ENCODE measurements at regions of chr1 and their contacts with region 1.

Region 1: GRCh38 chr1:206663832-206664652 is 20.7 kb upstream of the MAPKAPK2 start:
- DNase-seq: peak; percentile 78
- H3K4me3 Mint-ChIP-seq: no peak overlapping the region
- H3K27ac Mint-ChIP-seq: no peak overlapping the region
- H3K4me1 Mint-ChIP-seq: peaks cover 38% of the 10 kb centered on the region
- H3K27me3 Mint-ChIP-seq: peaks cover 9% of the 10 kb centered on the region

Region 2: GRCh38 chr1:206479183-206480125 is 184.6 kb before region 1 on chr1:
- CTCF ChIA-PET with region 1: interaction called, 48 read pairs
- POLR2A ChIA-PET with region 1: no interaction called
- intact Hi-C with region 1: no loop called
- DNase-seq: peak; percentile 79
- H3K4me3 Mint-ChIP-seq: no peak overlapping the region
- H3K27ac Mint-ChIP-seq: peak overlapping the region; percentile 26
- H3K4me1 Mint-ChIP-seq: peaks cover 37% of the 10 kb centered on the region
- H3K27me3 Mint-ChIP-seq: no peaks in the 10 kb centered on the region

Region 3: DNA sequence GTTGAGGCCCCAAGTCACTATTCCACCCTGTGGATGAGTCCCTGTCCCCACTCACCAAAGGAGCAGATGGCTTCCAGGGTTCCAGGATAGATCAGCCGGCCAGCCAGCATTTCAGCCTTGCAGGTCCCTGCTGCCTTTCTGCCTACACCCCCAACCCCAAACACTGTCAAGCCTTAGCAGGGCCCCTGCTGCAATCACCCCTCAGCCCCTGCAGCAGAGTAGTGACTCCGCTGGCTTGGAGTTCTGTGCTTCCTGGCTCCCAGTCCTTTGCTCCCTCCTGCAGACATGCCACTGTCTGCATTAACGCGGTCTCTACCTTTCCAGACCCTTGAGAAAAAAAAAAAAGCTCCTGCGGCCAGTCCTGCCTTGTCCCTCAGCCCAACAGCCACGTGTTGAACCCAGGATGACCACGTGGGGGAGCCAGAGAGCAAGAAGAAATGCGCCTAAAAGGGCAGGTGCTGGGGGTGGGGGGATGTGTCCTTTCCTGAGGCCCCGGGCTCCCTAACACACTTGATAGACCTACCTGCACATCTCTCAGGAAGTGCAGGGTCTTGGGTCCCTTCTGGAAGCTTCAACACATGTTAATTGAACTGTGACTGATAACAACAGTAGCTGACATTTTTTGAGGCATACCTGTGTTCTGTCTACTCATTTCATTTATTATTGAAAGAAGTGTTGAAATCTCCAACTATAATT is 119.3 kb before region 1 on chr1:
- CTCF ChIA-PET with region 1: interaction called, 35 read pairs
- POLR2A ChIA-PET with region 1: interaction called, 3 read pairs
- intact Hi-C with region 1: loop called (anchors 2 kb)
- DNase-seq: peak; percentile 88
- H3K4me3 Mint-ChIP-seq: no peak overlapping the region
- H3K27ac Mint-ChIP-seq: peak overlapping the region; percentile 42
- H3K4me1 Mint-ChIP-seq: peaks cover 17% of the 10 kb centered on the region
- H3K27me3 Mint-ChIP-seq: no peaks in the 10 kb centered on the region

Region 4: GRCh38 chr1:206563367-206564207 is 100.5 kb before region 1 on chr1:
- CTCF ChIA-PET with region 1: no interaction called
- POLR2A ChIA-PET with region 1: no interaction called
- intact Hi-C with region 1: no loop called
- DNase-seq: no peak
- H3K4me3 Mint-ChIP-seq: peak overlapping the region; percentile 72
- H3K27ac Mint-ChIP-seq: peak overlapping the region; percentile 99
- H3K4me1 Mint-ChIP-seq: peaks cover 86% of the 10 kb centered on the region
- H3K27me3 Mint-ChIP-seq: no peaks in the 10 kb centered on the region

Region 5: GRCh38 chr1:206612129-206612876 is 51.7 kb before region 1 on chr1 and contains the start of gene EIF2D:
- CTCF ChIA-PET with region 1: interaction called, 165 read pairs
- POLR2A ChIA-PET with region 1: interaction called, 7 read pairs
- intact Hi-C with region 1: loop called (anchors 1 kb)
- DNase-seq: peak; percentile 96
- H3K4me3 Mint-ChIP-seq: peak within 1 kb of the TSS; percentile 96
- H3K27ac Mint-ChIP-seq: peak within 1 kb of the TSS; percentile 90
- H3K4me1 Mint-ChIP-seq: peaks cover 32% of the 10 kb centered on the region
- H3K27me3 Mint-ChIP-seq: no peaks in the 10 kb centered on the region
- total RNA-seq, gene EIF2D: 84.6 to 87.5 TPM

Region 6: DNA sequence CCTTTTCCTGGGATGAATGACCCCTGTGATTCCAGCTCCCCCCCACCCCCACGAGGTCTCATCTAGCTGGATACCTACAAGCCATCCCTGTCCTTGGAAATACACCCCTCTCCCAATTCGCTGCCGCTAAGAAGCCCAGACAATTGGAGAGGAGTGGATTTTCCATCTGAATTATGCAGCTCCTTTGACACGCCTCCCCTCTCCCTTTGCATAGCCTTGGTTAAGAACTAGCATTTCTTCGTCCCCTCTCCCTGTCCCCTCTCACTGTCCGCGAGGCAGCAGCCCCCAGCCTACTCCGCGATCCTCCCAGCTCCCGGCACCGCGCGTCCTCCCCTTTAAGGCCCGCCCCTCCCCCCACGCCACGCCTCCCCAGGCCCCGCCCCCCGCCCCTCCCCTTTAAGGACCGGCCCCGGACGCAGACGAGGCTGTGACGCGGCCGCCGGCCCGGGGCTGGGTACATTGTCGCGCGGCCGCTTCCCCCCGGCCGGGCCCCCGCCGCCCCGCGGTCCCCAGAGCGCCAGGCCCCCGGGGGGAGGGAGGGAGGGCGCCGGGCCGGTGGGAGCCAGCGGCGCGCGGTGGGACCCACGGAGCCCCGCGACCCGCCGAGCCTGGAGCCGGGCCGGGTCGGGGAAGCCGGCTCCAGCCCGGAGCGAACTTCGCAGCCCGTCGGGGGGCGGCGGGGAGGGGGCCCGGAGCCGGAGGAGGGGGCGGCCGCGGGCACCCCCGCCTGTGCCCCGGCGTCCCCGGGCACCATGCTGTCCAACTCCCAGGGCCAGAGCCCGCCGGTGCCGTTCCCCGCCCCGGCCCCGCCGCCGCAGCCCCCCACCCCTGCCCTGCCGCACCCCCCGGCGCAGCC is 20.7 kb after region 1 on chr1 and contains the start of gene MAPKAPK2:
- CTCF ChIA-PET with region 1: interaction called, 33 read pairs
- POLR2A ChIA-PET with region 1: interaction called, 3 read pairs
- intact Hi-C with region 1: no loop called
- DNase-seq: peak; percentile 83
- H3K4me3 Mint-ChIP-seq: peak within 1 kb of the TSS; percentile 90
- H3K27ac Mint-ChIP-seq: peak within 1 kb of the TSS; percentile 95
- H3K4me1 Mint-ChIP-seq: peaks cover 58% of the 10 kb centered on the region
- H3K27me3 Mint-ChIP-seq: peaks cover 1% of the 10 kb centered on the region
- total RNA-seq, gene MAPKAPK2: 96.9 to 97.4 TPM

Region 7: GRCh38 chr1:206716870-206717673 is 53.0 kb after region 1 on chr1:
- CTCF ChIA-PET with region 1: interaction called, 13 read pairs
- POLR2A ChIA-PET with region 1: interaction called, 3 read pairs
- intact Hi-C with region 1: no loop called
- DNase-seq: peak; percentile 45
- H3K4me3 Mint-ChIP-seq: no peak overlapping the region
- H3K27ac Mint-ChIP-seq: peak overlapping the region; percentile 61
- H3K4me1 Mint-ChIP-seq: peaks cover 83% of the 10 kb centered on the region
- H3K27me3 Mint-ChIP-seq: no peaks in the 10 kb centered on the region

Region 8: GRCh38 chr1:206757524-206758266 is 93.7 kb after region 1 on chr1:
- CTCF ChIA-PET with region 1: no interaction called
- POLR2A ChIA-PET with region 1: no interaction called
- intact Hi-C with region 1: no loop called
- DNase-seq: peak; percentile 61
- H3K4me3 Mint-ChIP-seq: no peak overlapping the region
- H3K27ac Mint-ChIP-seq: no peak overlapping the region
- H3K4me1 Mint-ChIP-seq: peaks cover 31% of the 10 kb centered on the region
- H3K27me3 Mint-ChIP-seq: peaks cover 2% of the 10 kb centered on the region

Measured in activated CD4-positive, alpha-beta memory T cell treated with anti-CD3 and anti-CD28 coated beads for 36 hours (primary cell).